Prostate gland (tissue), 2 donors: ENCODE measurements at regions of chr11 and their contacts with region 1.

Region 1: DNA sequence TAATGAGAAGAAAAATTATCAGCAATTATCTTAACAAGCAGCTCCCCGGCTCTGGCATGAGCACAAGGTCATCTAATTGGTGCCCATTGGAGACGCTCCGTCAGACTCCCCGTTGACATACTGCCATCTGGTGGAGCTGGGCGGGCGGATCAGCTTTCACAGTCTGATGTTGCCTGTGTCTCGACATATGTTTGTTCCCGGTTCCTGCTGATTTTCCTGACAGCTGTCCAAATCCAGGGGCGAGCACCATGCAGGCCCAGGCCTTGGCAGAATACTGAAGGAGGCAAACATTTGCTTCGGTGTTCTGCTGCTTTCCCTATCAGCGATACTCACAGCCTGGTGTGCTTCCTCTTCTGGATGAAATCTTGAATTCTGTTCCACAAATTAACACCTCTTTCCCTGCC is 43.8 kb upstream of the BARX2 start:
- DNase-seq: peak; percentile 85
- H3K4me3 ChIP-seq: no peak overlapping the region
- H3K27ac ChIP-seq: no peak overlapping the region
- H3K4me1 ChIP-seq: no peaks in the 10 kb centered on the region
- H3K27me3 ChIP-seq: no peaks in the 10 kb centered on the region
- CTCF ChIP-seq: peak; percentile 66 to 90 (median 88)
- POLR2A ChIP-seq: no peak

Region 2: GRCh38 chr11:129117595-129118350 is 214.1 kb before region 1 on chr11:
- intact Hi-C with region 1: loop called (anchors 2 kb)
- DNase-seq: peak; percentile 51
- H3K4me3 ChIP-seq: no peak overlapping the region
- H3K27ac ChIP-seq: no peak overlapping the region
- H3K4me1 ChIP-seq: no peaks in the 10 kb centered on the region
- H3K27me3 ChIP-seq: no peaks in the 10 kb centered on the region
- CTCF ChIP-seq: peak; percentile 32 to 85 (median 82)
- POLR2A ChIP-seq: no peak